ENCODE measurements at regions of chr11 and their contacts with region 1.

Region 1: DNA sequence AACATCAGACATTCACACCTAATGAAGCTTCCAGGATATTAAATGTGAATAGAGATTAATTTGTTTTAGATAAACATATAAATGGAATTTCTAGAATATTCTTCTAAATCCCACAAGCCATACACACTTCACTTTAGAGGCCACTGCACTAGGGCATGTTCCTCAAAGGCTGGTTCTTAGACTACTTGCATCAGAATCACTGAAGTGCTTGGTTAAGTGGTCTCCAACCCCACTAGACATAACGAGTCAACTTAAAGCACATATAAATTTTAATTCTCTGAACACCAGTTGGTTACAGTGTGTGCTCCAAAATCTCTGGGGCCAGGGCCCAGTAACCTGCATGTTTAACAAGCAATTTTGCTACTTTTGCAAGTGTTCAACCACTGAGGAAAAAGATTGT is 7.9 kb upstream of the ALKBH8 start:
- DNase-seq: no peak
- ATAC-seq: no peak
- H3K4me3 ChIP-seq: no peak overlapping the region
- H3K27ac ChIP-seq: no peak overlapping the region
- H3K4me1 ChIP-seq: no peaks in the 10 kb centered on the region
- H3K27me3 ChIP-seq: no peaks in the 10 kb centered on the region
- CTCF ChIP-seq: no peak

Region 2: DNA sequence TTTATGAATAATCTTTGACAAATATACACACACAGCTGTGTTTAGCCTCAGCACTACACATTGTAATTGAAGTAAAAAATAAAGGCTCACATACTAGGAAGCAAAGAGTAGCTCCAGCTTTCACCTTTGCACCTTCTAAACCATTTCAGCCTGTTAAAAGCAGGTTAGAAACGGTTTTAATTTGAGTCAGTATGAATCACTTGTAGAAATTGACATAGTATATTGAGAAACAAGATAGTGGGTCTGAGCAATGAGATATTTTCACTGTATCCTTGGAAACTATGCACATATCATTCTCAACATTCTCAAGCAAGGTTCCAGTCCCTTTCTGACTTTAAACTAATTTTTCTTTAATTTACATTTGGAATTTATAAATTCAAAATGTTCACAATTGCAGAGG is 1115.7 kb before region 1 on chr11:
- CTCF ChIA-PET with region 1: interaction called, 10 read pairs
- POLR2A ChIA-PET with region 1: no interaction called
- in situ Hi-C with region 1: no loop called
- intact Hi-C with region 1: no loop called
- DNase-seq: no peak
- ATAC-seq: no peak
- H3K4me3 ChIP-seq: no peak overlapping the region
- H3K27ac ChIP-seq: no peak overlapping the region
- H3K4me1 ChIP-seq: no peaks in the 10 kb centered on the region
- H3K27me3 ChIP-seq: no peaks in the 10 kb centered on the region
- CTCF ChIP-seq: no peak